Dendritic cell treated with granulocyte-macrophage colony-stimulating factor and Interleukin-4, amounts not matched to agents 40 ng/mL and 50 ng/mL, for 4 days (primary cell): ENCODE measurements at regions of chr4 and their contacts with region 1.

Region 1: DNA sequence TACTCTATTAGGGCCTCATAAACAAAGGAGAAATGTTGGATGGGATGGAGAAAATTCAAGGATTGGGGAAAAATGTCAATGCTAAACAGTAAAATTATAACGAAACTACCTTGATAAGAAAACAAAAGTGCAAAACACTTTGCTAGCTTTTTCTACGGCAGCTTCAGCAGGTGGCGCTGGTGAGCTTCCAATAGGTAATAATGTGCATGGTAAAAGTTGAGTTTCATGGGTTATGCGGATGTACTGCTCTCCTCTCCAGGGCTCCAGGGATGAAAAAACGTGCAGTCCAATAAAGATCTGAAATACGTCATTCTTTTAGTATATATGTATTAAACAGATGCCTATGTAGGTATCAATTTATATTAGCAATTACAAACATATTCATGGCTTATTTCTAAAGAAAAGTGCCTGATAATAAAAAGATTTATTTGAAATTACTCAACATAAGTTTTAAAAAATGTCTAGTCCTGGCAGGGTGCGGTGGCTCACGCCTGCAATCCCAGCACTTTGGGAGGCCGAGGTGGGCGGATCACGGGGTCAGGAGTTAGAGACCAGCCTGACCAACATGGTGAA is 239.6 kb downstream of the GRXCR1 start:
- H3K4me3 Mint-ChIP-seq: no peak overlapping the region
- H3K27ac Mint-ChIP-seq: no peak overlapping the region
- H3K4me1 Mint-ChIP-seq: no peaks in the 10 kb centered on the region
- H3K27me3 Mint-ChIP-seq: no peaks in the 10 kb centered on the region

Region 2: DNA sequence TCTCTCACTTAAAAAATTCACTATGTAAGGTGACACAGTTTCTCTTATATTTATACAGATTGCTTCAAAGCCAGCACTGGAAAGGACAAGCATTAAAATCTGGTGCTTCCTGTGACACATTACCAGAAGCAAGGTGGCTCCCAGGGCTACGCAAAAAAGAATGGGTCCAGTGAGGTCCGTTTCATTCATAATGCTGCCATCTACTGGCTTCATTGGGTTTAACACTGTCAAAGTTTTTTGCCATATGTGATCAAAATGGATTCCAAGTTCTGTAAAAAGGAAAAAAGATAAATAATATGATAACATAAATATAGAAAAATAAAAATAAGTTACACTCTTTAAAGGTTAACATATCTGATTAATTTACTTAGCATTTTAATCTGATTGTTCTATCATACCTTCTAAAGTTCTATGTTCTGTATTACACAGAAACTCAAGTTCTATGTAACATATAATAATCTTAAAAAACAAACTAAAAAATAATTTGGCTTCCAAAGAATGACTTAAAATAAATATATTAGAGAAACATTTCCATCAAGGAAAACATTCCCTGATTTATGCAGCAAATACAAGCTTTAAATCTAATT is 1497.3 kb after region 1 on chr4:
- intact Hi-C with region 1: loop called (anchors 10 kb)
- H3K4me3 Mint-ChIP-seq: no peak overlapping the region
- H3K27ac Mint-ChIP-seq: no peak overlapping the region
- H3K4me1 Mint-ChIP-seq: no peaks in the 10 kb centered on the region
- H3K27me3 Mint-ChIP-seq: peaks cover 1% of the 10 kb centered on the region